ENCODE measurements at regions of chr12 and their contacts with region 1.

Region 1: DNA sequence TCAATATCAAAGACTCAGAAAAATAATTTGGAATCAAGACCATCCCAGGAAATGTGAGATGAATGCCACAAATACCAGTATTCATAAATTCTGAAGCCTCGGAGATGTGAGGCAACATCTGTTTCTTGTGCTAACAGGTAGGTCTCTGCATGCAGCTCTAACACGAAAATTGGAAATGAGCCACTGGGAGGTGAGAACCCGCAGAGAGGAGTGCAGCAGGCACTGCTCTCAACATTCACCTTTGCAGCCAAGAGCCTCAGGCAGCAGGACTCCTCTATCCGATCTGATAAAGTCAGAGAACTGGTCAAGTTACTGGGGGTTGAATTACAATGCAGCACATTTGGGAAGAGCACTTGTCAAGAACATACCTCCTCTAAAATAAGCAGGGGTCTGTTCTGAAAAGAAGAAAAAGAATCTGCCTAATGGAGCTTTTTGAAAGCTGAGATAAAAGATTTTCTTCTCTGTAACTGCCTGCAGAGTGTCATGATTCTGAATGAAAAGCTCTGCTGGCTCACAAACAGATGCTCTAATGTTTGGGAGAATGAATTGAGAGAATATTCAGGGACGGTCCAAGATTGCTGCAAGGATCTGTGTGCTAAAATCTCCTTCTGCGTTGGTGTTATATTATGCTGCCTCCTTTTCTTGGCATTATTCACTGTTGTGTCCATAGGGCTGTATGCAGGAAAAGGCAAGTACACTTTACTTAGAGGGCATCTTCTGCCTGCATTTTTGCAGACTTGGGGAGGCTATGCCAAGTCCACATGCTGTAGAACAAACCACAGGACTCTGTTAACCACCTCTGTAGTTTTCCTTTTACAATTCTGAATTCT is 209.6 kb upstream of the KRR1 start:
- DNase-seq: no peak
- H3K4me3 ChIP-seq: no peak overlapping the region
- H3K27ac ChIP-seq: no peak overlapping the region
- H3K4me1 ChIP-seq: peaks cover 4 to 17% (median 12%) of the 10 kb centered on the region in 4 experiments; a peak in 4 of 7 replicates
- H3K27me3 ChIP-seq: no peaks in the 10 kb centered on the region; a peak in 1 of 7 replicates
- CTCF ChIP-seq: no peak
- EP300 ChIP-seq: no peak
- POLR2A ChIP-seq: no peak
- RAD21 ChIP-seq: peak in 1 of 2 experiments; percentile 22; a peak in 1 of 4 replicates

Region 2: GRCh38 chr12:75699728-75700496 is 21.1 kb before region 1 on chr12:
- CTCF ChIA-PET with region 1: no interaction called
- POLR2A ChIA-PET with region 1: no interaction called
- DNase-seq: no peak
- H3K4me3 ChIP-seq: no peak overlapping the region
- H3K27ac ChIP-seq: no peak overlapping the region
- H3K4me1 ChIP-seq: peaks cover 0 to 6% (median 3%) of the 10 kb centered on the region in 4 experiments; a peak in 3 of 7 replicates
- H3K27me3 ChIP-seq: no peaks in the 10 kb centered on the region
- CTCF ChIP-seq: no peak
- EP300 ChIP-seq: no peak
- POLR2A ChIP-seq: no peak
- RAD21 ChIP-seq: no peak

Region 3: DNA sequence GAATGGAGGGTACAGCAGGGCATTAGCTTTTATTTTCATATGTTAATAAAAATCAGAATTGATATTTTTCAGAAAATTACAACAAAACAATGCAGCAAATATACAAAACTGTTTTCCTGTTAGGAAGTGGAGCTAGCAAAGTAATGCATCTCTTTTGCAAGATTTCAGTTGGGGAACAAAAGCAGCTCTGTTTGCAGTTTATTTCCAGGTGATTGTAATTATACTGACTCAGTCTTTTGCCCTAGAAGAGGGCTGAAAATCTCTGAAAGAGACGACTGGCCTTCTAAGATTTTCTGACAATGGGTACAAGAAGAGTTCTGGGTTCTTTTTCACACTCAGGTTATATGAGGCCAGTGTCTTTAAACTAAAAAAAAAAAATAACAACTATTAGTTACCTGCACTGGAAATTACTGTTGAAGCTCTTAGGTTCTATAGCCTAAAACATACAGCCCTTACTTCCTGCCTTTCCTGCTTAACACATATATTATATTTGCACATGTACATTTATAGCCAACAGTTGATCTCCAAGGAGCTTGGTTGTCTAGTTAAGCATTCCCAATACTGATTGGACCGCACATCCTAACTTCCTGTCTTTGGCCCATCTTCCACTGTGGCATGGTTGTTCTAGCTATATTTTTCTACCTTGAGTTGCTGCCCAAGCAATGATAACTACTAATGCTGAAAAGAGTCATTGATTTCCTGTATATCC is 10.5 kb before region 1 on chr12:
- CTCF ChIA-PET with region 1: interaction called, 11 read pairs
- POLR2A ChIA-PET with region 1: interaction called, 3 read pairs
- DNase-seq: no peak
- H3K4me3 ChIP-seq: no peak overlapping the region
- H3K27ac ChIP-seq: no peak overlapping the region
- H3K4me1 ChIP-seq: peaks cover 0 to 3% (median 3%) of the 10 kb centered on the region in 4 experiments; a peak in 3 of 7 replicates
- H3K27me3 ChIP-seq: no peaks in the 10 kb centered on the region
- CTCF ChIP-seq: no peak
- EP300 ChIP-seq: no peak
- POLR2A ChIP-seq: no peak
- RAD21 ChIP-seq: no peak

Measured in H1 (cell line).